ENCODE measurements at regions of chr1 and their contacts with region 1.

Region 1: DNA sequence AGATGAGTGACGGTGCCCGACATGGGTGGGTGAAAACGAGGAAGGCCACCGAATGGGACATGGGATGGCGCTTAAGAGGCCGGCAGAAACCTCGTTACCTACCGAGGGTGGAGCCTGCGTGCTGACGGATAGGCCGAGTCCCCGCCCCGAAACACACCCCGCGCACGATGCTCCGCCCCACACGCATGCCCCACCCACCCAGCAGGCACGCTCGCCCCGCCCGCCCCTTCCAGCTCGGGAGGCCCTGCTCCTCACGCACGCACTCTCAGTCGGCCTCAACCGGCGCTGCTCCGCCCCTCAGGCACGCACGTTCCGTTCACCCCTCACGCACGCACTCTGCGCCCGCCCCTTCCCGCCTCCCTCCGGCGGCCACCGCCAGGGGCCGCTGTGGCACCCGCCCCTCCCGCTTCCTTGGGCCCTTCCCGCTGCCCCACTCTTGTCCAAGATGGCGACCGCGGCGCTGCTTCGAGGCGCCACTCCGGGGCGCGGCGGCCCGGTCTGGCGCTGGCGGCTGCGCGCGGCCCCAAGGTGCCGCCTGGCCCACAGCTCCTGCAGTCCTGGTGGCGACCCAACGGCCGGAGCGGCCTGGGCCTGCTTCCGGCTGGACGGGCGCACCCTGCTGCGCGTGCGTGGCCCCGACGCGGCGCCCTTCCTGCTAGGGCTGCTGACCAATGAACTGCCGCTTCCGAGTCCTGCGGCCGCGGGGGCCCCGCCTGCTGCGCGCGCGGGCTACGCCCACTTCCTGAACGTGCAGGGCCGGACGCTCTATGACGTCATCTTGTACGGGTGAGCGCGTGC is at the start of gene IBA57:
- DNase-seq: peak; percentile 98
- H3K4me3 ChIP-seq: peak within 1 kb of the TSS; percentile 74 to 79
- H3K27ac ChIP-seq: peak within 1 kb of the TSS; percentile 93 to 98
- H3K4me1 ChIP-seq: peaks cover 13 to 25% of the 10 kb centered on the region in 2 experiments; a peak in 3 of 4 replicates
- H3K27me3 ChIP-seq: no peaks in the 10 kb centered on the region
- CTCF ChIP-seq: peak; percentile 79
- EP300 ChIP-seq: no peak; a peak in 1 of 4 replicates
- RAD21 ChIP-seq: no peak
- polyA plus RNA-seq, gene IBA57: 1.8 TPM in 2 replicates

Region 2: DNA sequence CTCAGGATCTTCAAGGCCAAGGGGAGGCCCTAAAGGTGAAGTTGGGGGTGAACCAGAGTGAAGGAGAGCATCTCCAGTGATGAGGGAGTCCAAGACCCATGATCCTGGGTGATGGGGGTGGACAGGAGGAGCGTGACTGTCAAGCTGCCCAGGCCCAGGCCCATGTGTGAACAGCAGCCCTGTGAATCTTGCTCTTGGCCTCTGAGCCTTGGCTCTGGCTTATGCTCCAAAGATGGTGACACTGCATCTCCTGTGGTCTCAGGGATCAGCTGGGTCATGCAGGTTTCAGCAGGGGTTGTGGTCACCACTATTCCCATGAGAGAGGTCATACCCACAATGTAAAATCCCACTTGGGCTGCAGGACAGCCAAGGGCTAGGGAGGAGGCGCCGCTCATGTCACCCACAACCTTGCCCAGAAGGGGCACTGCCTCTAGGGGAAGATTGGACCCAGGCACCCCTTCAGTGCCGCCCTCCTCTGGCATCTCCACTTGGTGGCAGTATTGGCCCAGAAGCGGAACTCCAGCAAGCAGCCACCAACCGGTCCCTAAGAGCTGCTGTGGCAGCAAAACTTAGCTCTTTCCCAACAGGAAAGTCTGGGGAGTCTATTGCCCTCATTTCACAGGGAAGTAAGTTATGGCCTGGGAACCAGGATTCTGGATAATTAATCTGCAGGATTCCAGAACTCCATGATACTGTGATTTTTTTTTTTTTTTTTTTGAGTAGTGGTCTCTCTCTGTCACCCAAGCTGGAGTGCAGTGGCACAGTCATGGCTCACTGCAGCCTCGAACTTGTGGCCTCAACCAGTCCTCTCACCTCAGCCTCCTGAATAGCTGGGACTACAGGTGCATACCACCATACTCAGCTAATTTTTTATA is 166.3 kb before region 1 on chr1:
- CTCF ChIA-PET with region 1: interaction called, 10 read pairs
- POLR2A ChIA-PET with region 1: interaction called, 3 read pairs
- DNase-seq: peak; percentile 83
- H3K4me3 ChIP-seq: no peak overlapping the region; a peak in 1 of 4 replicates
- H3K27ac ChIP-seq: no peak overlapping the region
- H3K4me1 ChIP-seq: no peaks in the 10 kb centered on the region
- H3K27me3 ChIP-seq: peaks cover 6% of the 10 kb centered on the region; the same call in 1 of the 2 replicates
- CTCF ChIP-seq: peak; percentile 58
- EP300 ChIP-seq: no peak
- RAD21 ChIP-seq: peak; percentile 86

Region 3: GRCh38 chr1:228131766-228132165 is 33.8 kb before region 1 on chr1:
- CTCF ChIA-PET with region 1: interaction called, 38 read pairs
- POLR2A ChIA-PET with region 1: no interaction called
- DNase-seq: no peak
- H3K4me3 ChIP-seq: no peak overlapping the region
- H3K27ac ChIP-seq: no peak overlapping the region
- H3K4me1 ChIP-seq: no peaks in the 10 kb centered on the region
- H3K27me3 ChIP-seq: peaks cover 28% of the 10 kb centered on the region; the same call in 1 of the 2 replicates
- CTCF ChIP-seq: no peak
- EP300 ChIP-seq: no peak
- RAD21 ChIP-seq: no peak

Region 4: GRCh38 chr1:228139944-228140656 is 25.5 kb before region 1 on chr1 and contains the start of gene GUK1:
- CTCF ChIA-PET with region 1: interaction called, 24 read pairs
- POLR2A ChIA-PET with region 1: interaction called, 6 read pairs
- DNase-seq: peak; percentile 97
- H3K4me3 ChIP-seq: peak within 1 kb of the TSS; percentile 87 to 99
- H3K27ac ChIP-seq: peak within 1 kb of the TSS; percentile 84 to 89
- H3K4me1 ChIP-seq: peaks cover 23% of the 10 kb centered on the region in 2 experiments; a peak in 2 of 4 replicates
- H3K27me3 ChIP-seq: peaks cover 23% of the 10 kb centered on the region; the same call in 1 of the 2 replicates
- CTCF ChIP-seq: no peak; the same call in 1 of the 2 replicates
- EP300 ChIP-seq: no peak
- RAD21 ChIP-seq: no peak
- polyA plus RNA-seq, gene GUK1: 717 and 742 TPM in 2 replicates

Region 5: GRCh38 chr1:228150461-228151179 is 15.0 kb before region 1 on chr1:
- CTCF ChIA-PET with region 1: interaction called, 24 read pairs
- POLR2A ChIA-PET with region 1: interaction called, 5 read pairs
- DNase-seq: peak; percentile 44
- H3K4me3 ChIP-seq: no peak overlapping the region
- H3K27ac ChIP-seq: no peak overlapping the region; a peak in 1 of 4 replicates
- H3K4me1 ChIP-seq: peaks cover 0 to 12% of the 10 kb centered on the region in 2 experiments; a peak in 1 of 4 replicates
- H3K27me3 ChIP-seq: no peaks in the 10 kb centered on the region
- CTCF ChIP-seq: no peak
- EP300 ChIP-seq: no peak
- RAD21 ChIP-seq: no peak